ENCODE measurements at regions of chr16 and their contacts with region 1.

Region 1: GRCh38 chr16:10509534-10510025 is 70.8 kb downstream of the EMP2 start:
- DNase-seq: peak; percentile 79
- ATAC-seq: peak; percentile 100
- H3K4me3 ChIP-seq: no peak overlapping the region
- H3K27ac ChIP-seq: no peak overlapping the region
- H3K4me1 ChIP-seq: peaks cover 2% of the 10 kb centered on the region; the same call in 1 of the 2 replicates
- H3K27me3 ChIP-seq: no peaks in the 10 kb centered on the region
- CTCF ChIP-seq: peak; percentile 87
- POLR2A ChIP-seq: no peak
- RAD21 ChIP-seq: peak; percentile 86

Region 2: GRCh38 chr16:9008601-9009260 is 1500.8 kb before region 1 on chr16:
- CTCF ChIA-PET with region 1: no interaction called
- POLR2A ChIA-PET with region 1: no interaction called
- dilution Hi-C with region 1: no loop called
- in situ Hi-C with region 1: loop called (anchors 25 kb)
- intact Hi-C with region 1: no loop called
- DNase-seq: peak; percentile 56
- ATAC-seq: peak; percentile 97
- H3K4me3 ChIP-seq: no peak overlapping the region
- H3K27ac ChIP-seq: no peak overlapping the region
- H3K4me1 ChIP-seq: peaks cover 2% of the 10 kb centered on the region; the same call in 1 of the 2 replicates
- H3K27me3 ChIP-seq: no peaks in the 10 kb centered on the region
- CTCF ChIP-seq: peak; percentile 76
- POLR2A ChIP-seq: peak; percentile 30; the same call in 1 of the 2 replicates
- RAD21 ChIP-seq: peak; percentile 81

Region 3: DNA sequence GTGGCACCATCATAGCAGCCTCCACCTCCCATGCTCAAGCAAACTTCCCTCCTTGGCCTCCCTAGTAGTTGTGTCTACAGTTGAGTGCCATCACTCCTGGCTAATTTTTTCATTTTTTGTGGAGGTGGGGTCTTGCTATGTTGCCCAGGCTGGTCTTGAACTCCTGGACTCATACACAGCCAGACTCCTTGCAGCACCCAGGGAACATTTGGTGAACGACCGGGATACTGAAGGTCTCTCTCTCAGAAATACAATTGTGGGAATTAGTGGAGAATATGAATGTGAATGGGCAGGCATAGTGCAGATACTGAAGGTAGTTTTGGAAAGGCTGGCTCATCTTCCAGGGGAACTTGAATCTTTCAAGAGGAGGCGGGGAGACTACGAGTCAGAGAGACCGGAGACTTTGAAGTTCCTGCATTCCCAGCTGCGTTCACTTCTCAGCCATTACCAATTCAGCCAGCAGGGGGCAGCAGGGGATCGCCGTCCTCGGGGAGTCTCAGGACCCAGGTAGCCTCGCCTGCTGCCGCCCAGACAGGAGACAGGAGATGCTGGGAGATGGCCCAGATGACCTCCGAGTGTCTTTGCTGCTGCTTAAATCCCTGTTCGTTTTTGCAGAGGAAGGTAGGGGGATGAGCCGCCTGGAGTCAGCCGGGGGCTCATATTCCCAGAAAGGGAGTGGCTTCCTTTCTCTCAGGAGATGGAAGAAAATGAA is 1349.6 kb before region 1 on chr16:
- CTCF ChIA-PET with region 1: no interaction called
- POLR2A ChIA-PET with region 1: no interaction called
- dilution Hi-C with region 1: no loop called
- in situ Hi-C with region 1: loop called (anchors 10 kb)
- intact Hi-C with region 1: loop called (anchors 1 kb)
- DNase-seq: peak; percentile 66
- ATAC-seq: peak; percentile 99
- H3K4me3 ChIP-seq: no peak overlapping the region
- H3K27ac ChIP-seq: no peak overlapping the region
- H3K4me1 ChIP-seq: no peaks in the 10 kb centered on the region
- H3K27me3 ChIP-seq: no peaks in the 10 kb centered on the region
- CTCF ChIP-seq: peak; percentile 83
- POLR2A ChIP-seq: no peak
- RAD21 ChIP-seq: peak; percentile 81

Region 4: GRCh38 chr16:10256784-10257641 is 252.6 kb before region 1 on chr16:
- CTCF ChIA-PET with region 1: no interaction called
- POLR2A ChIA-PET with region 1: no interaction called
- dilution Hi-C with region 1: no loop called
- in situ Hi-C with region 1: loop called (anchors 5 kb)
- intact Hi-C with region 1: no loop called
- DNase-seq: no peak
- ATAC-seq: peak; percentile 59
- H3K4me3 ChIP-seq: no peak overlapping the region
- H3K27ac ChIP-seq: no peak overlapping the region
- H3K4me1 ChIP-seq: no peaks in the 10 kb centered on the region
- H3K27me3 ChIP-seq: no peaks in the 10 kb centered on the region
- CTCF ChIP-seq: peak; percentile 63
- POLR2A ChIP-seq: no peak
- RAD21 ChIP-seq: peak; percentile 55

Region 5: DNA sequence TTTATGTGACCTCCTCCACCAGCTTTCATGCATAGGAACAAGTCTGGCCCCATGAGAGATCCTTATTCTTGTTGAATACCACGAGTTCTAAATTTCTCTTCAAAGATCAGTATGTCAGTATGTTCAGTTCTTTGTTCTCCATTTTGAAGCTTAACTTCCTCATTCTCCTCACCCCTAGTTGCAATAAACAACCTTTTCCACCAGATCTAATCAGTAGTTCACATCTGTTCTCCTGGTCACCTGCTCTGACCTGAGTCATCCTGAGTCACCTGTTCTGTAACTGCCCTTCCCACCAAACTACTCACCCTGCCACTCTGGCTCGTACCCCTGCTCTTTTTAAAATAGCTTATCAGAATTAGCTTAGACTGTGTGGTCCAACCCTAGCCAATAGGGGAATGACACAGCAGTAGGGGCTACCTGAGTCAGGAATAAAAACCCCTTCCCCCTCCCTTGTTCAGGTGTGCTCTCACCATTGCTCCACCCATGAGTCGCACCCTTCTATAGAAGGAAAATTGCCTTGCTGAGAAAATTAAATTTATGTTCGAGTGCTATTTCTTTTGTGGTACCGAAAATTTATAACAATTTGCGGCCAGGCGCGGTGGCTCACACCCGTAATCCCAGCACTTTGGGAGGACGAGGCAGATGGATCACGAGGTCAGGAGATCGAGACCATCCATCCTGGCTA is 23.7 kb before region 1 on chr16:
- CTCF ChIA-PET with region 1: no interaction called
- POLR2A ChIA-PET with region 1: no interaction called
- dilution Hi-C with region 1: no loop called
- in situ Hi-C with region 1: no loop called
- intact Hi-C with region 1: no loop called
- DNase-seq: no peak
- ATAC-seq: no peak
- H3K4me3 ChIP-seq: no peak overlapping the region
- H3K27ac ChIP-seq: no peak overlapping the region
- H3K4me1 ChIP-seq: no peaks in the 10 kb centered on the region
- H3K27me3 ChIP-seq: no peaks in the 10 kb centered on the region
- CTCF ChIP-seq: no peak
- POLR2A ChIP-seq: no peak
- RAD21 ChIP-seq: no peak

Region 6: DNA sequence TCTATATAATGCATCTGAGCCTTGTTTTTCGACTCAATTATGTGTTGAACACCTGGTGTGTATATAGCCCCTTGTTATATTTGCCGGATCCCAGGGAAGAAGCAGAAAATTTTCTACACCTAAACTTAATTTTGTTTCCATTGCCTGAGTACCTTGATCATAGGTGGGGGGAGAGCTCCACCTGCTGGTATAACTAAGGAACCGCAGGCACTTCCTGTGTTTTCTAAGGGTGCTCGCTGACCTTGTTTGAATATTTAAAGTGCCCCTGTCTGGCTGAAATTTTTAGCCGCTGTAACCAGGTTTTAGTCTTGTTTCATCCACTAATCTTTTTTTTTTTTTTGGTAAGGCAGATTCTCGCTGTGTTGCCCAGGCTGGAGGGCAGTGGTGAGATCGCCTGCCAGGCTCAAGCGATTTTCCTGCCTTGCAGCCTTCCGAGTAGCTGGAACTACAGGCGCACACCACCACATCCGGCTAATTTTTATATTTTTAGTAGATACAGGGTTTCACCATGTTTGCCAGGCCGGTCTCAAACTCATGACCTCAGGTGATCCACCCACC is 227.6 kb after region 1 on chr16:
- CTCF ChIA-PET with region 1: interaction called, 22 read pairs
- POLR2A ChIA-PET with region 1: no interaction called
- dilution Hi-C with region 1: no loop called
- in situ Hi-C with region 1: no loop called
- intact Hi-C with region 1: loop called (anchors 1 kb)
- DNase-seq: peak; percentile 61
- ATAC-seq: peak; percentile 89
- H3K4me3 ChIP-seq: no peak overlapping the region
- H3K27ac ChIP-seq: no peak overlapping the region
- H3K4me1 ChIP-seq: peaks cover 2% of the 10 kb centered on the region; the same call in 1 of the 2 replicates
- H3K27me3 ChIP-seq: no peaks in the 10 kb centered on the region
- CTCF ChIP-seq: peak; percentile 96
- POLR2A ChIP-seq: 0 out of 2 replicates have a peak, but pooled peaks have one; percentile 26
- RAD21 ChIP-seq: peak; percentile 96